ENCODE measurements at regions of chr14 and their contacts with region 1.

Region 1: GRCh38 chr14:75709207-75709812 is 48.3 kb downstream of the TTLL5 start:
- DNase-seq: peak; percentile 24 to 89
- H3K4me3 ChIP-seq: no peak overlapping the region
- H3K27ac ChIP-seq: peak overlapping the region in 1 of 2 donors; percentile 12
- H3K4me1 ChIP-seq: peaks cover 0 to 15% of the 10 kb centered on the region in 2 donors
- H3K27me3 ChIP-seq: no peaks in the 10 kb centered on the region
- CTCF ChIP-seq: peak; percentile 59 to 83 (median 82)

Region 2: DNA sequence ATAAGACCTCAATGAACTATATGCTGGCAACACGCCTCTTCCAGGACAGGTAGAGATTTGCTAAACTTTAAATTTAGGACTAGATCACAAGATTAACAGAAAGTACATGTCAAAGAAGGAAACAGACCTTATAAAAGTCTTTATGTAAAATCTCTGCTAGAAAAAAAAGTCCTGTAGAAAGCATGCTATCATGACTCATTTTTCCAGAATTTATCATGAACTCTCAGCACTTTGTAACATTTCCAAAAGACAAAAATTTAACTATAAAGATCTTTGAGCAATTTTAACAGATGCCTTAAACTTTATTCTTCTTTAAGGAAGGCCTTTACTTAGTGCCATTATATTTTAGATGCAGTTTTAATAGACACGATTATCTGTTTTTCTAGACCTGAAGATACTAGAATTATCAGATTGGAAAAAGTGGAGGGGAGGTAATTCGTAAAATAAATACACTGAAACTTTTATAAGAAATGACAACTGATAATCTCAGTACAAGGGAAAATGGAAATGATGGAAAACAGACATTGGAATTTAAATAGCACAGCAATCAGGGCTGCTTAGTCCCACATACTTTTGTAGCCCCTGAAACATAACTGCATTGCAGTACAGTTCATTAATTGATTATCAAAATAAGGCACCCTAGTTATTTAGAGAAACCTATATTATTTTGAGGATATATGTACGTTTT is 43.7 kb after region 1 on chr14:
- intact Hi-C with region 1: loop called (anchors 5 kb)
- DNase-seq: no peak
- H3K4me3 ChIP-seq: no peak overlapping the region
- H3K27ac ChIP-seq: peak overlapping the region in 1 of 2 donors; percentile 9
- H3K4me1 ChIP-seq: peaks cover 0 to 7% of the 10 kb centered on the region in 2 donors
- H3K27me3 ChIP-seq: no peaks in the 10 kb centered on the region
- CTCF ChIP-seq: no peak

Region 3: DNA sequence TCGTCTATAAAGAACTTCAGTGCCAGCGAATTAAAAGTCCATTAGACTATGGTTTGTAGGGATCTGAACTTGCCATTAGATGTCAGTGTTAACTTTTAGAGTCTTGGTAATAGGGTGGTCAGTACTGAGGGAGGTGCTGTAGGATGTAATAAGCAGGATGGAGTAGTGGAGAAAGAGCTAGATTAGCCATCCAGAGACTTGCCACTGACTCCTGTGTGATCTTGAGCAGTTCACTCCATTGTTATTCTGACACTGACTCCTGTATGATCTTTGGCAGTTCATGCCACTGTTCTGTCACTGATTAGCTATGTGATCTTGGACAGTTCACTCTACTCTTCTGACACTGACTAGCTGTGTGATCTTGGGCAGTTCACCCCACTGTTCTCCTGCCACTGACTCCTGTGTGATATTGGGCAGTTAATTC is 85.3 kb after region 1 on chr14:
- intact Hi-C with region 1: loop called (anchors 2 kb)
- DNase-seq: no peak
- H3K4me3 ChIP-seq: no peak overlapping the region
- H3K27ac ChIP-seq: no peak overlapping the region
- H3K4me1 ChIP-seq: no peaks in the 10 kb centered on the region
- H3K27me3 ChIP-seq: no peaks in the 10 kb centered on the region
- CTCF ChIP-seq: peak in 2 of 3 experiments; percentile 22 to 61

Region 4: DNA sequence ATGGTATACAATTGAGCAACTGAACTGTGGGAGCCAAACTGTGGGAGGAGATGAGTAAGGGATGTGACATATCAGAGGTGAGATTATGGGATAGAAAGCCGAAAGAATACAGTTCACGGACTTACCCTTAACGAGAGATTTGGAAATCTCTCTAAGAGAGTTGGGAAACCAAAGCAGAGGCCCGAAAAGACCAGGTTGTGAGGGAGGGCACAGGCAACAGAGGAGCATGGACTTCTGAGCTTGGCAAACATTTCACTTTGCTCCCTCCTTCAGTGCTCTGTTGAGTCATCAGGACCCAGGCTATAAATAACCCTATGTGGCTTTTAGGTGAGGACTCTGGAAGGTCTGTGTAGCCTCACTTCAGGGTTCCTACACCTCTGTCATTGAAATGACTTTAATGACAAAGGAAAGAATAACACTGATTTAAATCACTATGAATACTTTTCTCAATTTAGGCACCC is 151.9 kb after region 1 on chr14:
- intact Hi-C with region 1: loop called (anchors 5 kb)
- DNase-seq: no peak
- H3K4me3 ChIP-seq: no peak overlapping the region
- H3K27ac ChIP-seq: no peak overlapping the region
- H3K4me1 ChIP-seq: peaks cover 0 to 4% of the 10 kb centered on the region in 2 donors
- H3K27me3 ChIP-seq: no peaks in the 10 kb centered on the region
- CTCF ChIP-seq: no peak

Region 5: DNA sequence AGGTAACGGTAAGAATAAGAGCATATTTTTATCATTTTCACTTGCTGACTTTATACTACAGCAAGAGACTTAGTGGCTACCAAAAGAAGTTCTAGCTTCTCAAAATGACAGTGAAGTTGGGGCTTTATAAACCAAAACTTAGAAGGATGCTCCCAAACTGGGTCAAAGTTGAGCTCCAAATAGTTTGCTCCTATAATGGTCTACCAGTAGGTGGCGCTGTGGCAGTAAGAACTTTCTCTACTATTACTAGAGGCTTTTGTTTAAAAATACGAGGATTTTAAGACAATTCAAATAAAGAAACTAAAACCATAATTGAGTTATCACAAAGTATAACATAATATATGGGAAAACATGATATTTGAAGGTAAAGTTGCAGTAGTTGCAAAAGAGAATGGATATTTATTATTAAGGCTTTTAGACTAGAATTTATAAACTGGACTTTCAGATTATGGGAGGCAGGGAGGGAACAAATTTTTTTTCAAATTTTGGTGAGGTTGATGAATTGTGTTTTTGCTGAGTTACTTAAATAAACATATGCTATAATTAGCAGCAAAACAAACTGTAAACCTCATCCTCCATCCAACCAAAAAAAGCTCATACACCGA is 197.5 kb after region 1 on chr14:
- intact Hi-C with region 1: loop called (anchors 2 kb)
- DNase-seq: peak in 1 of 2 donors; percentile 79
- H3K4me3 ChIP-seq: peak overlapping the region in 1 of 2 donors; percentile 6
- H3K27ac ChIP-seq: peak overlapping the region; percentile 42 to 51
- H3K4me1 ChIP-seq: peaks cover 0 to 5% of the 10 kb centered on the region in 2 donors
- H3K27me3 ChIP-seq: no peaks in the 10 kb centered on the region
- CTCF ChIP-seq: peak; percentile 69 to 87 (median 85)

Region 6: GRCh38 chr14:76050797-76051392 is 341.6 kb after region 1 on chr14:
- intact Hi-C with region 1: loop called (anchors 10 kb)
- DNase-seq: no peak
- H3K4me3 ChIP-seq: no peak overlapping the region
- H3K27ac ChIP-seq: no peak overlapping the region
- H3K4me1 ChIP-seq: no peaks in the 10 kb centered on the region
- H3K27me3 ChIP-seq: no peaks in the 10 kb centered on the region
- CTCF ChIP-seq: peak; percentile 75 to 80 (median 78)